Psoas muscle (tissue), 8 donors: ENCODE measurements at regions of chr6 and their contacts with region 1.

Region 1: GRCh38 chr6:62039605-62040004 is 246.4 kb downstream of the KHDRBS2 start:
- DNase-seq: no peak
- ATAC-seq: no peak
- H3K4me3 ChIP-seq: no peak overlapping the region
- H3K27ac ChIP-seq: no peak overlapping the region
- H3K4me1 ChIP-seq: no peaks in the 10 kb centered on the region
- H3K27me3 ChIP-seq: no peaks in the 10 kb centered on the region
- CTCF ChIP-seq: no peak

Region 2: DNA sequence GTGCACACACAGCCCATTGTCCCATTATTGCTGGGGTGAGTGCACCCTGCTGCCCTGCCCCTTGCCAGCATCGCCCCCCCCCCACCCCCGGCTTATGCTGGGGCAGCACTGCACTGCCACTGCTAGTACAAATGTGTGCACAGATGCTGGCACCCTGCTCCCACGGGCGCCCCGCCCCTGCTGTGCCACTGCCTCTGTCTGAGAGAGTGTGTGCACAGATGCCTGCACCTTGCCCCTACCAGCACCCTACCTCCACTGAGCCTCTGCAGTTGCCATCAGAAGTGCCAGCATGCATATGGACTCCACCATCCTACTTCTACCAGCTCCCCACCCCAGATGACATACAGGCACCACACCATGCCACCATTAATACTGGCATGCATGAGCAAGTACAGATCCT is 701.0 kb after region 1 on chr6:
- intact Hi-C with region 1: no loop called
- DNase-seq: no peak
- ATAC-seq: no peak
- H3K4me3 ChIP-seq: no peak overlapping the region
- H3K27ac ChIP-seq: no peak overlapping the region
- H3K4me1 ChIP-seq: no peaks in the 10 kb centered on the region
- H3K27me3 ChIP-seq: no peaks in the 10 kb centered on the region
- CTCF ChIP-seq: no peak

Region 3: DNA sequence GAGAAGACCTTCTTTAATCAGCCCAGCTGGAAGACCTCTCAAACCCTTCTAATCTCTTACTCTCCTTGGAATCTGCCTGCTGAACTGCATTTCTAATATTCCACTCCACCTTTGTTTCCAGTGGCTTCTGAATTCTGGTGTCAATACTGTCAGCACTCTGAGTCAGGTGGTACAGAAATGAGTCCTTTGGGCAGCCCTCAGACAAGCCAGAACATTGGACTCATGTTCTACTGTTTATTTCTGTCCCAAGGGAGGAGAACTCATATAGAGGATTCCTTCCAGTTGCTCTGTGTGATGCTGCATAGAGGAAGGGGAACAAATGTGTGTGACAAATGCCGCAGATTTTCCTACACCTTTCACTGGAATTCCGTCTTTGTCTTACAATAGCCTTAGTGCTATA is 1710.8 kb after region 1 on chr6:
- intact Hi-C with region 1: loop called in 1 of 2 experiments (anchors 5 kb)
- DNase-seq: no peak
- ATAC-seq: no peak
- H3K4me3 ChIP-seq: no peak overlapping the region
- H3K27ac ChIP-seq: no peak overlapping the region
- H3K4me1 ChIP-seq: no peaks in the 10 kb centered on the region
- H3K27me3 ChIP-seq: no peaks in the 10 kb centered on the region
- CTCF ChIP-seq: no peak